ENCODE measurements at regions of chr9 and their contacts with region 1.

Region 1: DNA sequence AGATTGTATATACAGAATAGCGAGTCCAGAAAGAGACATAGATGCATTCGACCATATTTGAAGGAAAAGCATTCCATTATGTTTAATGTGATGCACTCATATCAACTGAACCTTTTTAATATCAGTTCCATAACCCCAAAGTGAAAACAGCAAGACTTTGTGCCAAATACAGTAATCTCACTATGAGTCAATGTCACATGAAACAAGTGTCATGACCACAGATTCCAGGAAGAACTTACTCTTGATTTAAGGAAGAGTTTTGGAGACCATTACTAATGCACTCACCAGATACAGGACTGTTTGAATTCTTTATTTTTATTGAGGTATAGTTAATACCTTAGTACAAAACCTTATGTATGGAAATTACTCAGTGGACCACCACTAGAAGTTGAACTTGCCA is 220.5 kb downstream of the SH3GL2 start:
- DNase-seq: no peak
- ATAC-seq: no peak
- H3K4me3 Mint-ChIP-seq: no peak overlapping the region
- H3K27ac Mint-ChIP-seq: no peak overlapping the region
- H3K4me1 Mint-ChIP-seq: no peaks in the 10 kb centered on the region
- H3K27me3 Mint-ChIP-seq: no peaks in the 10 kb centered on the region
- CTCF ChIP-seq: no peak

Region 2: DNA sequence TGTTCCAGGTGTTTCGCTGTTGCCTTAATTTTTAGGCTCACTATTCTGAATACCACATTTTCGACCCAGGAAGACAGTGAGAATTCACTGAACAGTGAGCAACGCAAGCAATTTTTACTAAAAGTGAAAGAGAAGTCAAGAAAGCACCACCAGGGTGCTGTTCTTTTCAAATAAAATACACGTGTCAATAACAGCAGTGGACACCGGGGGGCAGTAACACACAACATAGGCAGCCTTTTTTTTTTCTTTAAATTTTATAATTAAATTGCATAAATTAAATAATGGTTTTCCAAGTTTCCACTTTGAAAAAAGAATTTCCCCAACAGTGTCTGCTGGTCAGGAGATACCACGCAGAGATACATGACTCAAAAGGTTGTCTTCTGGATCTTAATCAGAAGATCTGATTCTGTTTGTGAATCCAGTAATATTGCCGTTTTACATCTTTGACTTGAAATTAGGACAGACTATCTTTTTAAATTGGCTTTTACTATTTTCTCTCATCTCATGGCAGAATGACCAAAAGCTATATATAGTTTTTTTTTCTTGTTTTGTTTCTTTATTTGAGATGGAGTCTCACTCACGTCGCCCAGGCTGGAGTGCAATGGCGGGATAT is 267.6 kb before region 1 on chr9:
- CTCF ChIA-PET with region 1: interaction called, 5 read pairs
- POLR2A ChIA-PET with region 1: no interaction called
- intact Hi-C with region 1: loop called (anchors 5 kb)
- DNase-seq: peak; percentile 60
- ATAC-seq: peak; percentile 37
- H3K4me3 Mint-ChIP-seq: no peak overlapping the region
- H3K27ac Mint-ChIP-seq: no peak overlapping the region
- H3K4me1 Mint-ChIP-seq: no peaks in the 10 kb centered on the region
- H3K27me3 Mint-ChIP-seq: peaks cover 1% of the 10 kb centered on the region
- CTCF ChIP-seq: peak; percentile 83

Region 3: DNA sequence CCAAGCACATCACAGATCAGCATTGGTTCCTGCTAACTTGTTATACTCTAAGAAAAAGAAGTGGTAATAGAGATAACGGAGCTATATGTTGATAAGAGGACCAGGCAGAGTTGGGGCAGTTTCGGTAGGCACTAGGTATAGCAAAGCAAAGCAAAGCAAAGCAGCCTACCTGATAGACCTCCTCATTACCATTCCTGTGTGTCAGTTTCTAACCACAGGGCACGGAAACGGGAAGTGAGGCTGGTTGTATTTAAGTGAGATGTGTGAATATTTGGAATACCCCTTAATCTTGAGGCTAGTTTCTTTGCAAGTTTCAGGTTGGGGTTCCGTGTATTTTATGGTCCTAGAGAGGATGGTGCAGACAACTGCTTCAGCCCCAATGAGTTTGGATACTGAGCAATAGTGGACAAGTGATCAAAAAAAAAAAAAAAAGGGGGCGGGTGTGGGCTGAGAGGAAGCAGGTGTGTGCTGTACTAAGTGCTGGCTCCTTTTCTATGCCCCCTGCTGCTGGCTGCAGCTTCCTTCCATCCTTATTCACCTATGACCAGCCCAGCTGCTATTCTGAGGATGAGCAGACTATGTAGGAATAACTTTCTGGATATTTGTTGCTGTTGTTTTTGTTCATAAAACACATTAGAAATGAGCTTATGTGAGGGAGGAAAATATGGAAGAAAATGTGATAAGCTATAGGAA is 37.3 kb before region 1 on chr9:
- CTCF ChIA-PET with region 1: no interaction called
- POLR2A ChIA-PET with region 1: no interaction called
- intact Hi-C with region 1: no loop called
- DNase-seq: no peak
- ATAC-seq: no peak
- H3K4me3 Mint-ChIP-seq: no peak overlapping the region
- H3K27ac Mint-ChIP-seq: no peak overlapping the region
- H3K4me1 Mint-ChIP-seq: no peaks in the 10 kb centered on the region
- H3K27me3 Mint-ChIP-seq: no peaks in the 10 kb centered on the region
- CTCF ChIP-seq: no peak

Region 4: GRCh38 chr9:17810728-17811571 is 11.6 kb after region 1 on chr9:
- CTCF ChIA-PET with region 1: interaction called, 13 read pairs
- POLR2A ChIA-PET with region 1: no interaction called
- intact Hi-C with region 1: no loop called
- DNase-seq: peak; percentile 64
- ATAC-seq: no peak
- H3K4me3 Mint-ChIP-seq: no peak overlapping the region
- H3K27ac Mint-ChIP-seq: no peak overlapping the region
- H3K4me1 Mint-ChIP-seq: no peaks in the 10 kb centered on the region
- H3K27me3 Mint-ChIP-seq: peaks cover 6% of the 10 kb centered on the region
- CTCF ChIP-seq: peak; percentile 84

Region 5: GRCh38 chr9:17863213-17863883 is 64.0 kb after region 1 on chr9:
- CTCF ChIA-PET with region 1: no interaction called
- POLR2A ChIA-PET with region 1: no interaction called
- intact Hi-C with region 1: no loop called
- DNase-seq: no peak
- ATAC-seq: no peak
- H3K4me3 Mint-ChIP-seq: no peak overlapping the region
- H3K27ac Mint-ChIP-seq: no peak overlapping the region
- H3K4me1 Mint-ChIP-seq: no peaks in the 10 kb centered on the region
- H3K27me3 Mint-ChIP-seq: no peaks in the 10 kb centered on the region
- CTCF ChIP-seq: no peak

Measured in activated CD8-positive, alpha-beta T cell treated with anti-CD3 and anti-CD28 coated beads for 36 hours (primary cell).